AG04449 (cell line): ENCODE measurements at regions of chr3 and their contacts with region 1.

Region 1: DNA sequence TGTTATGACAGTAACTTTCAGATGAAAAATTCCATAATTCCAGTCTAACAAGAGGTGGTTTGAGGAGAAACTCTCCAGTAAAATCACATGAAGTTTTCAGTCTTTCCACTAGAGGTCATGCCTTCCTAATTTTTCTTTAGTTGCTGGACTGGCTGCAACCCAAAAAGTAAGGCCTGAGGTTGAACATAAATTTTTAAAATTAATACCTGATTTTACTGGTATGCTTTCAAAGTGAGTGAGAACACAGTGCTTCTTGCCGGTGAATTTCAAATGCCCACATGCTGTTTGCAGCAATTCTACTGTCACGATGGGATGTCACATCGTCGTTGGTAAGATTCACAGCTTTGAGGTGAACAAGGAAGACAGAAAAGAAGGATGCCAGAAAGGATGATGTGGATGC is 89.0 kb upstream of the FGF12 start:
- DNase-seq: no peak
- H3K4me3 ChIP-seq: no peak overlapping the region
- CTCF ChIP-seq: peak; percentile 33

Region 2: DNA sequence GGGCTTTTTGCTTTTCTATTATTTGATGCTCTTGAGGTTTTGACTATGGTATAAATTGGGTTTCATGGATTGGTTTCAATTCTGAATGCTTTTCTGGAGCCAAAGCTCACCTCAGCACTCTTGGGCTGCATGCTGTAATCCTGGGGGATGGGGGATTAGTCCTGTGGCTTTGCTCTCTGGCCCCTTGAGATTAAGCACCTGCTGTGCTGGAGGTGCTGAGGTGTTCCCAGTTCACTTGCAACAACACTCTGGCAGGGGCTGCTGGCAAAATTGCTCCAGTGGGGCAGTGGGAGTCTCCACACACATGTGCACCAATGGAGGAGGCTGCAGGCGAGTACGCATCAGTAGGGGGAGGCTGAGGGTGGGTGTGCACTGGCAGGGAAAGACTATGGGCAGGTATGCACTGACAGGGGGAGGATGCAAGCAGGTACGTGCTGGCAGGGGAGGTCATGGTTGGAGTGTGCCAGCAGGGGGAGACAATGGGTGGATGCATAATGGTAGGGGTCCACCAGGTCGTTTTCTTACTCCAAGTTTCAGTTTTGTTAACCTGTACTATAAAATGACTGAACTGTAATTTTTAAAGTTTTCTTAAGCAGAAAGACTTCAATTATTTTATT is 578.3 kb before region 1 on chr3:
- CTCF ChIA-PET with region 1: no interaction called
- POLR2A ChIA-PET with region 1: no interaction called
- DNase-seq: no peak
- H3K4me3 ChIP-seq: no peak overlapping the region
- CTCF ChIP-seq: no peak

Region 3: DNA sequence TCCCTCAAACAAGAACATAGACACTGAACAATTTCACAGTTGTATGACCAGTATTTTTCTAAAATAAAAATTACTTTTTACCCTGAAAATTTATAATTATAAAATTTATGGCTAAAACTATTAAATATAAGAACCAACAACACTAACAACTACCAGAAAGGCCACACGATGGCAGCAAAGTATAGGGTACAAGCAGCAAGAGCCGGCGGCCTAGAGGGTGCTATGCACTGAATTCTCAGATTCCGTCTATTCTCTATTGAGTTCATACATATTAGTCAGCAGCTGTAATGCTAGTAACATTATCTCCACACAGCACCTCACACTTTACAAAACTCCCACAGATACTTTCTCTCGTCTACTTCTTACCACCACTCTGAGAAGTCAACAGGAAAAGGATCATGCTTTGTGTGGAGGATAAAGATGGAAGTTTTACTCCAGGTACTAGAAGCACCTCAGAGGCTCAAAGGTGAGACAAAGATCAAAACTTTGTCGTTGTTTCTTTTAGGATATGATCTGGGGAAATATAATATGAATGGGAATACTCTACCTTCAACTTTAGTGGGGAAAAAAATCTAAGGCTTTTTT is 249.6 kb before region 1 on chr3:
- CTCF ChIA-PET with region 1: interaction called, 12 read pairs
- POLR2A ChIA-PET with region 1: no interaction called
- DNase-seq: peak; percentile 74
- H3K4me3 ChIP-seq: no peak overlapping the region
- CTCF ChIP-seq: peak; percentile 71

Region 4: GRCh38 chr3:192706272-192706671 is 110.1 kb before region 1 on chr3:
- CTCF ChIA-PET with region 1: no interaction called
- POLR2A ChIA-PET with region 1: no interaction called
- DNase-seq: no peak
- H3K4me3 ChIP-seq: no peak overlapping the region
- CTCF ChIP-seq: no peak

Region 5: DNA sequence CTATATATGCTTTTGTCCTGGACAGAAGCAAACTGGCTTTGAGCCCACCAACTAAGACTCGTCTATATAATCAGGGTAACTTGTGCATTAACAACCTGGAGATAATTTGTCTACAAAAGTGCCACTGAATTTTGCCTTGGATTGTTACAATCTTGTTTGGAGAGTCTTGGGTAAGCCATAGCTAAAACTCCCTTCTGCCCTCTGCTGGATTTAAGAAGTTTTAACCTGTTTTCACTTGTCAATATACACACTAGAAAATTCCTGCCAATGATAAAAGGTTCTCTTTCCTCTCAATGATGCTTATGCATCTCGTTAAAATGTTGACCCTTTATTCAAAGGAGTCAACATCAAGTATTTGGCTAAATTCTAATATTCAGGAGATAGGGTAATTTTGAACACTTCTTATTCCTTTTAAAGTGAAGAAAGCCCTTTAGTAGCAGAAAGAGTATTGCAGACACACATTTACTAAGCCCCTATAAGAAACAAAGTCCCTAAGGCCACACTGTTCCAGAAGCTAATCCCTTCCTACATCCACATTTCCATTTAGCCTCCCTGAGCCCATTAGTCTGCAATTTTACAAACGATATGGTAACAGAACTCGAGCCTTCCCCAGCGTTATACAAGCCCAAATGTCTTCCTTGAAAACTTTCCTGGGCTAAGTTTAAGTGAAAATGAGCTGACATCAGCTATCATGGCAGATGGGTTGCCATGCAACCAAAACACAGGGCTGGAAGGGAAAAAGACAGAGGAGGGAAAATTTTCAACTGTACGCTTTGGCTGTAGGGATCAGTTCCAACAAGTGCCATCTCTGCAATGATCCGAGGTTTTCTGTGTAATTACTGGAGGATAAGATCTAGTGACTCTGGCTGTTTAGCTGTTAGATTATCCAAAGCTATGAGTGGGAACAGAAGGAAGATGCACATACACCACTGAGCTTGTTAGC is 13.1 kb before region 1 on chr3:
- CTCF ChIA-PET with region 1: interaction called, 95 read pairs
- POLR2A ChIA-PET with region 1: no interaction called
- DNase-seq: no peak
- H3K4me3 ChIP-seq: no peak overlapping the region
- CTCF ChIP-seq: peak; percentile 34

Region 6: GRCh38 chr3:192841428-192841827 is 25.1 kb after region 1 on chr3:
- CTCF ChIA-PET with region 1: no interaction called
- POLR2A ChIA-PET with region 1: no interaction called
- DNase-seq: no peak
- H3K4me3 ChIP-seq: no peak overlapping the region
- CTCF ChIP-seq: no peak

Region 7: DNA sequence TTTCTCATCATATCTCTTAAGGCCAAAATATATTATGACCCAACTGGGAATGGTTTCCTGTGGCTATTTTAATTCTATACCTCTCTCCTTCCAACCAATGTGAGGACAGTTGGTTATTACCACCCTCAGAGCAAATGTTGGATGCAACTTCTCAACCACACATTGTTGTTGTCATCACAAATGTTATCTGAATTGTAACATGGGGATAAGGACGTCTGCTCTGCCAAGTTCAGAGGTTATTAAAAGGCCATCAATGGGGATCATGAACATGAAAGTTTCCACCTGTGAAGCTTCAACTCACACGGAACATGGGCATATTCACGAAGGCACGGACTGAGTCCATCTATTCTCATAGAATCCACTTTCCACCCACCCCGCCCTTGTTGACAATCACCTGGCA is 54.5 kb after region 1 on chr3:
- CTCF ChIA-PET with region 1: no interaction called
- POLR2A ChIA-PET with region 1: no interaction called
- DNase-seq: no peak
- H3K4me3 ChIP-seq: no peak overlapping the region
- CTCF ChIP-seq: no peak

Region 8: DNA sequence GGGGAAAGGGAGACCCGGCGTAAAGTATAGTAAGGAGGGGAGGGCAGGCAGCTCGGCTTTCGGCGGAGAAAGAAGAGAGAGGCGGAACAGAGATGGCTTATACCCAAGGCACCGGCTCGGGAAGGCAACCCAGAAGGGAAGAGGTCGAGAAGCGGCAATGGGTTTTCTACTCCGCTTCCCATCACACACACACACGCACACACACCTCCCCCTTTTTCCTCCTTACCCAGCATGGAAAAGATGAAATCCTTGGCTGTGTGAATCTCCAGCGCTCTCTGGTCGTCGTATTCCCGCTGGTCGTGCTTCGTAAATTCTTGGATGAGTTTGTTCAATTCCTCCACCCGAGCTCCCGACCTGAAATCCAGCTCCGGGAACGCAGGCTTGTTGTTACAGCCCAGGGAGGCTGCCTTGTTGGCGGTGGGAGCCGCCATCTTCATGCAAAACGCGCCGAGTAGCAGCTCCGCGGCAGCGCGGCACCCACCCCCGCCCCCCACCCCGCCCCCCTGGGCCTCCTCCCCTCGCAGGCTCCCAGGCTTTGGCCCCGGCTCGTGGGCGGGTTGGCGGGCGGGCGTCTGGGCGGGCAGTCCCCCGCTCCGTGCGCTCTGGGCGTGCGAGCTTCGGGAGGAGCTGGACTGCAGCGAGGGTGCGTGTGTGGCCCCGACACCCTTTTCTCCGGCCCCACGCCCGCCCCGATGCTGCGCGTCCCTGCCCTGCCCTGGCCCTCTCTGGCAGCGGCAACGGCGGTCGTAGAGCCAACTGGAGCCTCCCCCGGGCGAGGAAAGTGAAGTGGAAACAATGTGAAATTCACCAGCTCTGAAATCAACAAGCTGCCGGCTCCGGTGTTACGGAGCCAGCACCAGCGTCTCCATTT is 101.3 kb after region 1 on chr3 and contains the start of gene MB21D2:
- CTCF ChIA-PET with region 1: interaction called, 160 read pairs
- POLR2A ChIA-PET with region 1: interaction called, 4 read pairs
- DNase-seq: no peak
- H3K4me3 ChIP-seq: peak within 1 kb of the TSS; percentile 97
- CTCF ChIP-seq: no peak

Region 9: DNA sequence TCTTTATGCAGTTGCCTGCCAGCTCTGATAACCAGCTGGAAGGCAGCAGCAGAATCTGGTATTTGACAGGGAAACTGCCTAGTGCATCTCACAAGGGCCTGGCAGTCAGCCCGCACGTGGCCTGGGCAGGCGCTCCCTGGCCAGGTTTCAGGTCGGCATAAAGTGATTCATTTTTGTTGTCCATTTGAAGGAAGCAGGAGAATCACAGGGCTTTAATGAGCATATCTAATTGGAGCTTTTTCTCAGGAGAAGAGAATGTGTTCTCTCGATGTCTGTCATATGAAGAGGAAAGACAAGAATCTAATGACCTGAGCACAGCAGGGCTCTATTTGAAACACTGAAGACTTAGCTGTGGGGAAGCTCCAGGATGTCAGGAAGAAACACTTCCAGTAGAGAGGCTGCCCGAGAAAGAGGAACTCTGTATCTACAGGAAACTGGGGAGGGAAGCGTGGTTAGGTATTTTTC is 200.1 kb after region 1 on chr3:
- CTCF ChIA-PET with region 1: interaction called, 11 read pairs
- POLR2A ChIA-PET with region 1: no interaction called
- DNase-seq: no peak
- H3K4me3 ChIP-seq: no peak overlapping the region
- CTCF ChIP-seq: no peak

Region 10: DNA sequence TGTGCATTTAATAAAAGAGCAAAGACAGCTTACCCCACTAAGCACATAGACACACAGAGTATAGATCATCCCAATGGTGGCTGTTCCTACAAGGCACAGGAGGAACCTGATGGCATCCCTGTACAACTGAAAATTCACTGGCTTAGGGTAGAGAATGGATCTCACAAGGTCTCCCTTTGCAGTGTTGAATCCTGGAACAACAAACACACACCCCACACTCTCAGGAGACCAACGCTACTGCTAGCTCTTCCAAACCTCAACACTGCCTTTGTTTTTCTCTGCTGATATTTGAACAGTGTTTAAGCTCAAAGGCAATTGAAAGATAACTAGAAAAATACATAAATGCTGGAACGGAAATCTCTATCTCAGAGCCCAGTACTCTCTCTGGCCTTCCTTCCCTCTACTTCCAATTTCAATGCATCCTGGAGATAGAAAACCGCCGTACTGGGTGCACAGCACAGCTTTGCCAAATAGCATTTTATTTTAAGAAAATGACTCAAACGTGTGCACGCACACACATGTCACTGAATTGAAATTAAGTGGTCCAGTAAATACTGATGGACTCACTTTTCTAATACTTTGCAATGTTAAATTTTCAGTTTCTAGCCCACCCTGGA is 649.7 kb after region 1 on chr3:
- CTCF ChIA-PET with region 1: interaction called, 15 read pairs
- POLR2A ChIA-PET with region 1: no interaction called
- DNase-seq: no peak
- H3K4me3 ChIP-seq: no peak overlapping the region
- CTCF ChIP-seq: no peak

Region 11: GRCh38 chr3:193572426-193572908 is 756.1 kb after region 1 on chr3:
- CTCF ChIA-PET with region 1: interaction called, 29 read pairs
- POLR2A ChIA-PET with region 1: no interaction called
- DNase-seq: no peak
- H3K4me3 ChIP-seq: no peak overlapping the region
- CTCF ChIP-seq: peak; percentile 78